ENCODE measurements at regions of chr22 and their contacts with region 1.

Region 1: DNA sequence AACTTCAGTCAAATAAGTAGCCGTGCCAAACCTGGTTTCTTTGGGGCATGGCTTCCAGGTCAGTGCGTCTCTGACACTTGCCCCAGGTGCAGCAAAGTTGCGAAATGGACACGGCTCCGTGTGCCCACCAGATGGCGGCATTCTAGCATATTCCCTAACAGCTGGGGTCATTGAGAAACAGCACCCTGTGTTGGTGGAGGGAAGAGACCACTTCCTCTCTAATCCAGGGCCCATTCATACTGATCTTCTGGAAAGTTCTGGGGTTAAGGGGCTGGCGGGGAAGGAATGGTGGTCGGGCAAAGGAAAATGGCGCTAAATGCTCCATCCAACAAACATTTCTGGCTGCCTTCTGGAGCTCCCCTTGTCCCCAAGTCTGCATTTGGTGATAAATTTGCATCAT is 141.2 kb upstream of the TIMP3 start:
- DNase-seq: peak; percentile 27 to 73 (median 43)
- ATAC-seq: no peak
- H3K4me3 ChIP-seq: no peak overlapping the region
- H3K4me3 Mint-ChIP-seq: no peak overlapping the region
- H3K27ac ChIP-seq: no peak overlapping the region
- H3K27ac Mint-ChIP-seq: no peak overlapping the region
- H3K4me1 ChIP-seq: peaks cover 5% of the 10 kb centered on the region
- H3K4me1 Mint-ChIP-seq: no peaks in the 10 kb centered on the region
- H3K27me3 ChIP-seq: peaks cover 3 to 4% of the 10 kb centered on the region in 2 experiments
- H3K27me3 Mint-ChIP-seq: peaks cover 17% of the 10 kb centered on the region
- CTCF ChIP-seq: peak; percentile 68

Region 2: DNA sequence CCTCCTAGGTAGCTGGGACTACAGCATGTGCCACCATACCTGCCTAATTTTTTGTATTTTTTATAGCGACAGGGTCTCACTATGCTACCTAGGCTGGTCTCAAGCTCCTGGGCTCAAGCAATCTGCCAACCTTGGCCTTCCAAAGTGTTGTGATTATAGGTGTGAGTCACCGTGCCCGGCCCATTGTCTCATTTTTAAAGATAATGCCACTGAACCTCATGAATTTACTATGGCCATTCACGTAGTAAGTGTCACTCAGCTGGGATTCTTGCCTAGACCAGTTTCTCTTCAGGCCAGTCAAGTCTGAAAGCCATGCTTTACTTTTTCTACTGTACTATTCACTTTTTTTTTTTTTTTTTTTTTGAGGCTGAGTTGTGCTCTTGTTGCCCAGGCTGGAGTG is 884.1 kb before region 1 on chr22:
- CTCF ChIA-PET with region 1: no interaction called
- POLR2A ChIA-PET with region 1: no interaction called
- intact Hi-C with region 1: no loop called
- DNase-seq: no peak
- ATAC-seq: no peak
- H3K4me3 ChIP-seq: no peak overlapping the region
- H3K4me3 Mint-ChIP-seq: no peak overlapping the region
- H3K27ac ChIP-seq: no peak overlapping the region
- H3K27ac Mint-ChIP-seq: no peak overlapping the region
- H3K4me1 ChIP-seq: no peaks in the 10 kb centered on the region
- H3K4me1 Mint-ChIP-seq: no peaks in the 10 kb centered on the region
- H3K27me3 ChIP-seq: no peaks in the 10 kb centered on the region
- H3K27me3 Mint-ChIP-seq: no peaks in the 10 kb centered on the region
- CTCF ChIP-seq: no peak

Region 3: GRCh38 chr22:32574408-32574807 is 85.9 kb before region 1 on chr22:
- CTCF ChIA-PET with region 1: no interaction called
- POLR2A ChIA-PET with region 1: no interaction called
- intact Hi-C with region 1: no loop called
- DNase-seq: no peak
- ATAC-seq: no peak
- H3K4me3 ChIP-seq: no peak overlapping the region
- H3K4me3 Mint-ChIP-seq: no peak overlapping the region
- H3K27ac ChIP-seq: no peak overlapping the region
- H3K27ac Mint-ChIP-seq: no peak overlapping the region
- H3K4me1 ChIP-seq: no peaks in the 10 kb centered on the region
- H3K4me1 Mint-ChIP-seq: no peaks in the 10 kb centered on the region
- H3K27me3 ChIP-seq: no peaks in the 10 kb centered on the region
- H3K27me3 Mint-ChIP-seq: no peaks in the 10 kb centered on the region
- CTCF ChIP-seq: no peak

Region 4: DNA sequence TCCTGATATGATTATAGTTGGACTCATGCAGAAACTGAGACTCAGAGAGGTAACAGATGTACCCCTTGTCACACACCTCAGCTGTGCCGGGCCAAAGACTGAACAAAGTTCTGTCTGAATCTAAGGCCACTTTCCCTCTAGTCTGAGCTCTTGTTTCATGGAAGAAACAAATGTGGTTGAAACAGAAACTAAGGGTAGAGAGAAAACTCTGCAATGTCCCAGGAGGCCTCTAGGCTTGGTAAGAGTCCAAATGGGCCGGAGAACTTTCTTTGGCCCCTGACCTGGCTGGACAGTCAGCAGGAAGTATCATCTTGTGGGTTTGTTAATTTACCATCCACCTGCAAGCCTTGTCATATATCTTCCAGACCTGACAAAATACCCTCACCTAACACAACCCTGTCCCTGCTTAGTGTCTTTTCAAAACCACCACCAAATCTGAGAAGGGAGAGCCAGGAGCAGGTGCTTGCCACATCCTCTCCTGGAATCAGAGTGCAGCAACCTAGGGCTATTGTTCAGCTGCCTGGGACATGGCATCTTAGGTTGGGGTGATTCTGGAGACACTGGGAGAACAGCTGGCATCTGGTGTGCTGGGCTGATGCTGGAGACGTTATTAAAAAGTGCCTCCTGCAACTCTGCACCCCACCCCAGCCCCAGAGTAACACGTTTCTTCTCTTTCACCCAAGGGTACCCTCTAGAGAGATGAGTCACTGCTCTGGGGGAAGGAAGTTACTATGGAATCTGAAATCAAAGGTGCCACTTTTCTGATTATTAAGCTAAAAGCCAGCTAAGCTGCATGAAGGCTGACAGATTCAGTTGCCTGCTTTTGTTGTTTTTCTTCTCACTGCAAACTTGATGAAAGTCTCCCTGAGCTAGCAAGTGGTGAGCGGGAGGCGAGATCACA is 14.9 kb after region 1 on chr22:
- CTCF ChIA-PET with region 1: no interaction called
- POLR2A ChIA-PET with region 1: no interaction called
- intact Hi-C with region 1: no loop called
- DNase-seq: no peak
- ATAC-seq: no peak
- H3K4me3 ChIP-seq: no peak overlapping the region
- H3K4me3 Mint-ChIP-seq: no peak overlapping the region
- H3K27ac ChIP-seq: no peak overlapping the region
- H3K27ac Mint-ChIP-seq: no peak overlapping the region
- H3K4me1 ChIP-seq: no peaks in the 10 kb centered on the region
- H3K4me1 Mint-ChIP-seq: no peaks in the 10 kb centered on the region
- H3K27me3 ChIP-seq: no peaks in the 10 kb centered on the region
- H3K27me3 Mint-ChIP-seq: peaks cover 7% of the 10 kb centered on the region
- CTCF ChIP-seq: no peak

Region 5: DNA sequence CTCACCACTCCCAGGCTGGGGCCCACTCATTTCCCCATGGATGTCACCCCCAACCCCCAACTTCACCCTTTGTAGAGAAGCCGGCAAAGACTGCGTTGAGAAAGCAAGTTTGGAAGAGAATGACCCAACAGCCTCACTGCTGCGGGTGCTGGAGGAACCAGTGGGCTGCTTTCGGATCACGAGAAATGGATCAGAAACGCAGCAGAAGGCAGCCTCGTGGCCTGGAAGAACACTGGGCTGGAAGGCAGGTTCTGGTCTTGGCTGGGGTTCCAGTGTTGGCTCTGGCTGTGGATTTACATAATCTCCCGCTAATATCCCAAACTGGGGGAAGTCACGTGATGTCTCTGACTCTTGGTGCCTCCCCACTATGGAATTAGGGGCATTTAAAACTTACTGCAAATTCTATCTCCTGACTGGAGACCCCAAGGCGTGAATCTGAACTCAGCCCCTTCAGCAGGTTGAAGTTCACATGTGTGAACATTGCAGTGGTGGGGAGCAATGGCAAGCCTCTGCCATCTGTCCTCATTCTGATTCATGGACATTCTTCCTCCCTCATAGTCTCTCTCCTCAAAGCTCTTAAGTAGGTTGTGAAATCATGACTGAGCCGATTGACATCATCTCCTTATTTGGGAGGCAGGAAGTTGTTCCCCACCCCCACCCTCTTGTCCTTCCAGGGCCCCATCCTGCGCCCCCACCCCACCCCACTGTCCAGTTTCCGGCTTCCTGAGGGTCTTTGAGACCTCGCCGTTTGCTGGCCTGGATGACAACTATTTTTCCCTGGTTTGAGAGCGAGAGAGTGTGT is 104.2 kb after region 1 on chr22:
- CTCF ChIA-PET with region 1: no interaction called
- POLR2A ChIA-PET with region 1: no interaction called
- intact Hi-C with region 1: no loop called
- DNase-seq: peak in 1 of 14 experiments; percentile 24
- ATAC-seq: no peak
- H3K4me3 ChIP-seq: no peak overlapping the region
- H3K4me3 Mint-ChIP-seq: no peak overlapping the region
- H3K27ac ChIP-seq: no peak overlapping the region
- H3K27ac Mint-ChIP-seq: no peak overlapping the region
- H3K4me1 ChIP-seq: peaks cover 4% of the 10 kb centered on the region
- H3K4me1 Mint-ChIP-seq: no peaks in the 10 kb centered on the region
- H3K27me3 ChIP-seq: peaks cover 15 to 20% of the 10 kb centered on the region in 2 experiments
- H3K27me3 Mint-ChIP-seq: peaks cover 31% of the 10 kb centered on the region
- CTCF ChIP-seq: no peak

Region 6: DNA sequence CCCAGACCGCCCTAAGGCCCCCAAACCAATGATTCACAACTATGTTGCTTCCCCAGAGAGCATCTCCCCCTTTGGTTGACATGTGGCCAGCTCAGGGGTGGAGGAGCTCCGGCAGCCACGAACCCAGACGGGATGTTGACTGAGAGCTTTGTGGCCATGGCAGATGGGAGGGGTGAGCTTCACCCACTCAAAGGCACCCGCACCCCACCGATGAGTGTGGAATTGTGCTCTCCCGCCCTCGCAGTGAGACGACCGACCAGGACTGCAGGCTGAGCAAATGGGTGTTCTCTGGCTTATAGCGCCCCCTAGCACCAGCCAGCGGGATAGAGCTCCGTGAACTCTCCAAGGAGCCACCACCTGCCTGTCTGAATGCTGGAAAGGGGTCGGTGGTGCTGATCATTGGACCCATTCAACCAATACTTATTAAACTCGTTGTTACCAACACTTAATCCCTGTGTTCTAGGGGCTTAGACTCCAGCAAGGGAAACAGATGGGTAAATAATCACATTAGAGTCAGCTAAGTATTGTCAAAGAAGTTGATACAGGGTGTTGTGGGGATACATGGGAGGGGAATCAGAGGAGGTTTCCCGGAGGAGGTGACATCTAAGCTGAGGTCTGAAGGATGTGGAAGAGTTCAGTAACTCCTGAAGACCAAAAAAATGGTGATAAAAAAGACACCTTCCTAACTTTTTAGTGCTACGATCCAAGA is 136.7 kb after region 1 on chr22:
- CTCF ChIA-PET with region 1: interaction called, 16 read pairs
- POLR2A ChIA-PET with region 1: interaction called, 8 read pairs
- intact Hi-C with region 1: loop called (anchors 1 kb)
- DNase-seq: peak; percentile 25 to 76 (median 42)
- ATAC-seq: peak; percentile 62
- H3K4me3 ChIP-seq: no peak overlapping the region
- H3K4me3 Mint-ChIP-seq: no peak overlapping the region
- H3K27ac ChIP-seq: no peak overlapping the region
- H3K27ac Mint-ChIP-seq: no peak overlapping the region
- H3K4me1 ChIP-seq: peaks cover 10% of the 10 kb centered on the region
- H3K4me1 Mint-ChIP-seq: no peaks in the 10 kb centered on the region
- H3K27me3 ChIP-seq: peaks cover 14 to 27% of the 10 kb centered on the region in 2 experiments
- H3K27me3 Mint-ChIP-seq: peaks cover 37% of the 10 kb centered on the region
- CTCF ChIP-seq: peak; percentile 71

Region 7: GRCh38 chr22:32985899-32986765 is 325.8 kb after region 1 on chr22:
- CTCF ChIA-PET with region 1: no interaction called
- POLR2A ChIA-PET with region 1: no interaction called
- intact Hi-C with region 1: loop called in 1 of 2 experiments (anchors 1 kb)
- DNase-seq: peak in 13 of 14 experiments; percentile 1 to 59 (median 13)
- ATAC-seq: no peak
- H3K4me3 ChIP-seq: no peak overlapping the region
- H3K4me3 Mint-ChIP-seq: no peak overlapping the region
- H3K27ac ChIP-seq: no peak overlapping the region
- H3K27ac Mint-ChIP-seq: no peak overlapping the region
- H3K4me1 ChIP-seq: peaks cover 5% of the 10 kb centered on the region
- H3K4me1 Mint-ChIP-seq: no peaks in the 10 kb centered on the region
- H3K27me3 ChIP-seq: peaks cover 0 to 3% of the 10 kb centered on the region in 2 experiments
- H3K27me3 Mint-ChIP-seq: peaks cover 4% of the 10 kb centered on the region
- CTCF ChIP-seq: peak; percentile 55

Region 8: GRCh38 chr22:33000342-33001280 is 340.3 kb after region 1 on chr22:
- CTCF ChIA-PET with region 1: no interaction called
- POLR2A ChIA-PET with region 1: no interaction called
- intact Hi-C with region 1: loop called in 1 of 2 experiments (anchors 5 kb)
- DNase-seq: peak in 10 of 14 experiments; percentile 3 to 41 (median 14)
- ATAC-seq: no peak
- H3K4me3 ChIP-seq: no peak overlapping the region
- H3K4me3 Mint-ChIP-seq: no peak overlapping the region
- H3K27ac ChIP-seq: no peak overlapping the region
- H3K27ac Mint-ChIP-seq: no peak overlapping the region
- H3K4me1 ChIP-seq: no peaks in the 10 kb centered on the region
- H3K4me1 Mint-ChIP-seq: no peaks in the 10 kb centered on the region
- H3K27me3 ChIP-seq: no peaks in the 10 kb centered on the region
- H3K27me3 Mint-ChIP-seq: peaks cover 9% of the 10 kb centered on the region
- CTCF ChIP-seq: peak; percentile 69

Measured in CD4-positive, alpha-beta T cell (primary cell).